A549 (cell line): ENCODE measurements at regions of chr6 and their contacts with region 1.

Region 1: GRCh38 chr6:161498359-161498758 is 224.5 kb upstream of the AGPAT4 start:
- DNase-seq: peak; percentile 18 to 68
- ATAC-seq: peak; percentile 77 to 98
- H3K4me3 ChIP-seq: no peak overlapping the region
- H3K27ac ChIP-seq: peak overlapping the region in 1 of 2 experiments; percentile 67; a peak in 3 of 6 replicates
- H3K4me1 ChIP-seq: no peaks in the 10 kb centered on the region
- CTCF ChIP-seq: peak; percentile 48
- EP300 ChIP-seq: no peak
- POLR2A ChIP-seq: no peak
- RAD21 ChIP-seq: peak; percentile 75 to 83

Region 2: GRCh38 chr6:161393839-161394364 is 104.5 kb before region 1 on chr6:
- CTCF ChIA-PET with region 1: interaction called, 28 read pairs
- POLR2A ChIA-PET with region 1: no interaction called
- DNase-seq: peak; percentile 67 to 79
- ATAC-seq: peak; percentile 93 to 98
- H3K4me3 ChIP-seq: no peak overlapping the region
- H3K27ac ChIP-seq: peak overlapping the region; percentile 49 to 76; a peak in 4 of 6 replicates
- H3K4me1 ChIP-seq: no peaks in the 10 kb centered on the region
- CTCF ChIP-seq: peak; percentile 82
- EP300 ChIP-seq: no peak
- POLR2A ChIP-seq: no peak
- RAD21 ChIP-seq: peak; percentile 83 to 85

Region 3: GRCh38 chr6:161486361-161487216 is 11.8 kb before region 1 on chr6:
- CTCF ChIA-PET with region 1: interaction called, 11 read pairs
- POLR2A ChIA-PET with region 1: no interaction called
- DNase-seq: peak; percentile 39 to 64
- ATAC-seq: peak; percentile 94 to 98
- H3K4me3 ChIP-seq: no peak overlapping the region
- H3K27ac ChIP-seq: peak overlapping the region; percentile 76 to 87
- H3K4me1 ChIP-seq: peaks cover 31% of the 10 kb centered on the region
- CTCF ChIP-seq: no peak
- EP300 ChIP-seq: no peak
- POLR2A ChIP-seq: no peak
- RAD21 ChIP-seq: no peak